ENCODE measurements at regions of chr15 and their contacts with region 1.

Region 1: GRCh38 chr15:41660235-41661077 is at the start of gene MGA:
- DNase-seq: peak; percentile 74 to 95 (median 89)
- ATAC-seq: peak; percentile 79
- H3K4me3 ChIP-seq: peak within 1 kb of the TSS; percentile 56 to 62
- H3K4me3 Mint-ChIP-seq: peak within 1 kb of the TSS; percentile 86
- H3K27ac ChIP-seq: peak within 1 kb of the TSS; percentile 90 to 98
- H3K27ac Mint-ChIP-seq: peak within 1 kb of the TSS; percentile 89
- H3K4me1 ChIP-seq: peaks cover 31% of the 10 kb centered on the region
- H3K4me1 Mint-ChIP-seq: peaks cover 54% of the 10 kb centered on the region
- H3K27me3 ChIP-seq: peaks cover 0 to 3% of the 10 kb centered on the region in 2 experiments
- H3K27me3 Mint-ChIP-seq: no peaks in the 10 kb centered on the region
- CTCF ChIP-seq: no peak
- total RNA-seq, gene MGA: 32.9 to 35.7 TPM

Region 2: DNA sequence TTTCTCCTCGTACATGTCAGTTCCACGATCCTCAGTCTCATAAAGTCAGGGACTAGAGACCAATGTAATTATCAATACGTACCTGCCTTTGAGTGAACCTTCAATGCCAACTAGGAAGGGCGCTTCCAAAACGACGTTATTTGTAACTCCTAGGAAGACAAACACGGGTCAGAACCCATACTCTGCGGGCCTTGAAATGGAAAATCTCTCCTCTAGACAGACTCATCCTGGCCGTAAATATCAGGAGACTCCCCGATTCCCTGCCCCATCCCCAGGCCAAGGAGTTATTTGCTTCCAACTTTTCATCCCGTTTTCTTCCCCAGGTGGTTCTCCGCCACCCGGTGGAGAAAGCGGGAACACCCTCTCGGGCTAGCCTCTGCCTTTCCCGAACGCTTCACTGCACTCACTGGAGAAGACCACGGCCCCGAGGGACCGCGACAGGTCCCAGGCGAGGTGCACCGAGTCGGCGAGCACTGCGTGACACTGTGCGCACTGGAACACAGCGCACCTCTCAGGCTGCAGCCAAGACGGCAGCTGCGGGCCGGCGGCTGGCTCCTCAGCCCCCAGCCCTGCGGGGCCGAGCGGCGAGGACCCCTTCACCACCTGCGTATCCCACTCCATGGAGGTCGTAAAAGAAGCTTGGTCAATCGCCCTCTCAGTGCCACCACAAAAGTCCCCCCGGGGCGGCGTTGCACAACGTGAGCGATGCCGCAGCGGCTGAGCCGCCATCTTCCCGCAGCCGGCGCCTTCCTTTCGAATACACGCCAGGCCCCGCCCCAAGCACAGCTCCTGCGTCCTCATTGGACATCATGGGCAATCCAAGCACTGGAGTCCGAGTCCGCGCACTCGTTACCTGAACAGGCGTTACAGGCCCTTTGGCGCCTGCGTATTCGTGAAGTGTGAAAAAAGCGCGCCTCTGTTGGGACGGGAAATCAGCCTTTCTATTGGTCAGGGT is 328.3 kb before region 1 on chr15 and contains the start of gene OIP5:
- CTCF ChIA-PET with region 1: no interaction called
- POLR2A ChIA-PET with region 1: no interaction called
- intact Hi-C with region 1: loop called in 1 of 2 experiments (anchors 5 kb)
- DNase-seq: peak; percentile 95 to 100 (median 96)
- ATAC-seq: peak; percentile 96
- H3K4me3 ChIP-seq: peak within 1 kb of the TSS; percentile 84 to 94
- H3K4me3 Mint-ChIP-seq: peak within 1 kb of the TSS; percentile 97
- H3K27ac ChIP-seq: peak within 1 kb of the TSS; percentile 46 to 63
- H3K27ac Mint-ChIP-seq: peak within 1 kb of the TSS; percentile 87
- H3K4me1 ChIP-seq: peaks cover 14% of the 10 kb centered on the region
- H3K4me1 Mint-ChIP-seq: peaks cover 30% of the 10 kb centered on the region
- H3K27me3 ChIP-seq: no peaks in the 10 kb centered on the region
- H3K27me3 Mint-ChIP-seq: no peaks in the 10 kb centered on the region
- CTCF ChIP-seq: peak; percentile 58
- total RNA-seq, gene OIP5: not detected

Region 3: GRCh38 chr15:41544650-41545015 is 115.8 kb before region 1 on chr15:
- CTCF ChIA-PET with region 1: no interaction called
- POLR2A ChIA-PET with region 1: interaction called, 6 read pairs
- intact Hi-C with region 1: loop called in 1 of 2 experiments (anchors 2 kb)
- DNase-seq: peak in 7 of 9 experiments; percentile 16 to 61 (median 55)
- ATAC-seq: peak; percentile 30
- H3K4me3 ChIP-seq: peak overlapping the region; percentile 88 to 95
- H3K4me3 Mint-ChIP-seq: peak overlapping the region; percentile 91
- H3K27ac ChIP-seq: peak overlapping the region in 1 of 2 experiments; percentile 64
- H3K27ac Mint-ChIP-seq: peak overlapping the region; percentile 95
- H3K4me1 ChIP-seq: peaks cover 8% of the 10 kb centered on the region
- H3K4me1 Mint-ChIP-seq: peaks cover 18% of the 10 kb centered on the region
- H3K27me3 ChIP-seq: no peaks in the 10 kb centered on the region
- H3K27me3 Mint-ChIP-seq: no peaks in the 10 kb centered on the region
- CTCF ChIP-seq: no peak

Region 4: DNA sequence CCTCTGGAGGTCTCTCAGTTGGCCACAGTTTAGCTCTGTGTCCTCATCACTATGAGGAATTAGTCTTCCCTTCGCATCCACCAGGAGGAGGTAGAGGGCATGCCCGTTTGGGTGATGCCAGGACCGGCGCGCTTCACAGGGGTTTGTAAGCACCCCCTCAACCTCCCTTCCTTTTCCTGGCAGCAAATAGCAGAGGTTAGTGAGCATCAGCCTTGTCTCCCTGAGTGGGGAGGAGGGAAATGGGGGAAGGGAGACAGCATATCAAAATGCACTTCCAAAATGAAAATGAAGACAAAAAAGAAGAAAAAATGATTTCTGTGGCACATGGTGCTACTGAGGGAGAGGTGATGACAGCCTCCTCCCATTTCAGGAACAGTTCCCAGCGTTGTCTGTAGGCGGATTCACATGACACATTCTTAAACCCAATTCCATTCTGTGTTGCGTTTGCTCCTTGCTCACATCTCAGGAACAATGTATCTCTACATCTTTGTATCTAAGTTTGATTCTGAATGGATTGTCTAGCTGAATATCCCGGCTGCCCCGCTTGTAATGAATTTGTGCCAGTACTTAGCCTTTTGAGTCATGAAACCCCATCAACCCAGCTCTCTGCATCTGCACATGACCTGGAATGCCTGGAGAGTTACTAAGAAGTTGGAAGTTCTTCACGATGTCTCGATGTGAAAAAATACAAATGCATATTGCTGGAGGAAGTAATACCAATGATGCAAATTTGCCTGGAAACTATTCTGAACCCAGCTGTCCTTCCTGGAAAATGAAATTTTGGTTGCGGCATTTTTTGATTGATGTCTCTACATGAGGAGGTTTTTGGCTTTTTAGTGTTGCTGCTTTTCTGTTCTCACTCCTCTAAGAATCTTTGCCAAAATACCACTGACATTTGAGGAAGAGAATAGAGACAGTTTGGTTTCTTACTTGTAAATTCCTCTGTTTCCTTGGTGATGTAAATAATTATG is 56.2 kb before region 1 on chr15:
- CTCF ChIA-PET with region 1: interaction called, 7 read pairs
- POLR2A ChIA-PET with region 1: no interaction called
- intact Hi-C with region 1: loop called in 1 of 2 experiments (anchors 10 kb)
- DNase-seq: peak; percentile 22 to 76 (median 59)
- ATAC-seq: peak; percentile 97
- H3K4me3 ChIP-seq: no peak overlapping the region
- H3K4me3 Mint-ChIP-seq: peak overlapping the region; percentile 53
- H3K27ac ChIP-seq: no peak overlapping the region
- H3K27ac Mint-ChIP-seq: no peak overlapping the region
- H3K4me1 ChIP-seq: peaks cover 4% of the 10 kb centered on the region
- H3K4me1 Mint-ChIP-seq: peaks cover 8% of the 10 kb centered on the region
- H3K27me3 ChIP-seq: no peaks in the 10 kb centered on the region
- H3K27me3 Mint-ChIP-seq: peaks cover 12% of the 10 kb centered on the region
- CTCF ChIP-seq: peak; percentile 71

Region 5: GRCh38 chr15:41671656-41672648 is 11.5 kb after region 1 on chr15:
- CTCF ChIA-PET with region 1: interaction called, 3 read pairs
- POLR2A ChIA-PET with region 1: interaction called, 15 read pairs
- intact Hi-C with region 1: no loop called
- DNase-seq: no peak
- ATAC-seq: no peak
- H3K4me3 ChIP-seq: no peak overlapping the region
- H3K4me3 Mint-ChIP-seq: no peak overlapping the region
- H3K27ac ChIP-seq: no peak overlapping the region
- H3K27ac Mint-ChIP-seq: peak overlapping the region; percentile 62
- H3K4me1 ChIP-seq: peaks cover 19% of the 10 kb centered on the region
- H3K4me1 Mint-ChIP-seq: peaks cover 65% of the 10 kb centered on the region
- H3K27me3 ChIP-seq: no peaks in the 10 kb centered on the region
- H3K27me3 Mint-ChIP-seq: no peaks in the 10 kb centered on the region
- CTCF ChIP-seq: no peak

Region 6: DNA sequence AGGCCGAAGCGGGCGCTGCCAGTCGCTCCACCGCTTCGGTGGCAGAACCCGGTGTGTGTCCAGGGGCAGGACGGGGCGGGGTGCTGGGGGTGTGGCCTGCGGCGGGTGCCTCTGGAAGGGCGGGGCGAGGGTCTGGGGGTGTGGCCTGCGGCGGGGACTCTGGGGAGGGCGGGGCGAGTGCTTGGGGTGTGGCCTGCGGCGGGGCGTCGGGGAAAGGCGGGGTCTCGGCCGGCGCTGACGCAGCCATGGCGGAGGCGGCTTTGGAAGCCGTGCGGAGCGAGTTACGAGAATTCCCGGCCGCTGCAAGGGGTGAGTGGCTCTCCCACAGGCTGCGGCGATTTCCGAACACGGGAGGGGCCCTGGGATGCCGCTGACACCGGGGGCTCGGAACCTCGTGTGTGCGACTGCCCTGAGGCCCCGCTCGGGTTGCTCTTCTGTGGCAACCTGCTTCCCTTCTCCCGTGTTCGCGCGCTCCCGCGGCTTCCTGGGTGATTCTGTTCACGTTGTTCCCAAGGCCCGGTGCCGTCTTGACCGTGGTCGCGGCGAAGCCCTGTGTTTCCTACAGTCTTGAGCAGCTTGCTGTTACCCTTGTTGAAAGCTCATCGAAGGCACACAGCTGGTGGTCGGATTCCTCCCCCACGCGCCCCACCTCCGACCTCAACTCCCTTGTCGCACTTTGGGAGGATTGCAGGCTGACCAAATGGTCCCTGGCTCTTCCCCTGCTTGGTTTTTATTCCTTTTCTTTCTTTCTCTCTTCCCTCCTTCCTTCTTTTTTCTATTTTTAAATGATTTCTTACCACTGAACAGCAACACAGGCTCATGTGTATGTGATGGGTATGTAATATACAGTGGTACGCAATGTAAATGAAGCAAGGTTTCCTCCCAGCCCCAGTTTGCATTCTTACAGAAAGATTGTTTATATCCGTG is 167.7 kb after region 1 on chr15 and contains the start of gene JMJD7:
- CTCF ChIA-PET with region 1: no interaction called
- POLR2A ChIA-PET with region 1: no interaction called
- intact Hi-C with region 1: loop called in 1 of 2 experiments (anchors 1 kb)
- DNase-seq: peak; percentile 93 to 98 (median 95)
- ATAC-seq: peak; percentile 97
- H3K4me3 ChIP-seq: peak within 1 kb of the TSS; percentile 93 to 95
- H3K4me3 Mint-ChIP-seq: peak within 1 kb of the TSS; percentile 83
- H3K27ac ChIP-seq: peak within 1 kb of the TSS; percentile 74 to 87
- H3K27ac Mint-ChIP-seq: peak within 1 kb of the TSS; percentile 87
- H3K4me1 ChIP-seq: peaks cover 35% of the 10 kb centered on the region
- H3K4me1 Mint-ChIP-seq: peaks cover 44% of the 10 kb centered on the region
- H3K27me3 ChIP-seq: no peaks in the 10 kb centered on the region
- H3K27me3 Mint-ChIP-seq: no peaks in the 10 kb centered on the region
- CTCF ChIP-seq: no peak
- total RNA-seq, gene JMJD7: 27.5 to 38.3 TPM

Region 7: DNA sequence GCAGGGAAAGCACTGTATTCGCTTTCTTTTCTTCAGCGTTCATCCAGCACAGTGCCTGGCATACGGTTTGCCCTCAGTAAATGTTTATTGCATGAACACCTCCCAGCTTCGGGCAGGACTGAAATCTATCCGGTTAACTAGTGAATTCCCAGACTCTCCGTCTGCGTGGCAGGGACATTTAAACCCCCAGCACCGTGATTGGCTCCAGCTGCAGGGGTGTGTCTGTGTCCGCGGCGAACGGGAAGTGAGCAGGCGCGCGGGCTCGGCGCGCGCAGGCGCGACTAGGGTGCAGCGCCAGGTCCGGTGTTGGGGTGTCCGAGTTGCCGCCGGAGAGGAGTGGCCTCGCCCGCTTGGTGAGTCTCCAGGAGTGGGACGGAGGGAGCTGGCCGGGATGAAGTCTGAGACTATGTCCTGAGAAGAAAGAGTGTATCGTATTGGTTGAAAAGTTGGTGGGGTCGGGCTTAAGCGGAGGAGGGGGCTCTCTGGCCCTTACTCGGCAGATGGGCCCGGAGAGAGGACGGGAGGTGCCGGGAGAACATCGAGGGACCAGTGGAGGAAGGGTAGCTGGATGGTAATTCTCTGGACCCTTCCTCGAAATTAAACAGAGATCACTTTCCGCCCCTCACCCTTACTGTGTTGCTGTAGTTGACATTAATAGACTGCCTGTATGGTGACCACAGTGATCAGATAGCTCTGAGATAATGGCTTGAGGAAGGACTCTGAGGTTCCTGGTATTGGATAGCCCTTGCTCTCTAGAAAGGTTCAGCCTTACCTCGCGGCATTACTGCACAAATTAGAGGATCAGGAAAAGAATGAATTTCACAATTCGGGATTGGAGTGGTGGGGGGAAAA is 835.1 kb after region 1 on chr15 and contains the start of gene SNAP23:
- CTCF ChIA-PET with region 1: no interaction called
- POLR2A ChIA-PET with region 1: no interaction called
- intact Hi-C with region 1: loop called in 1 of 2 experiments (anchors 5 kb)
- DNase-seq: peak; percentile 49 to 91 (median 84)
- ATAC-seq: peak; percentile 90
- H3K4me3 ChIP-seq: peak within 1 kb of the TSS; percentile 82 to 90
- H3K4me3 Mint-ChIP-seq: peak within 1 kb of the TSS; percentile 97
- H3K27ac ChIP-seq: peak within 1 kb of the TSS; percentile 60 to 71
- H3K27ac Mint-ChIP-seq: peak within 1 kb of the TSS; percentile 97
- H3K4me1 ChIP-seq: peaks cover 41% of the 10 kb centered on the region
- H3K4me1 Mint-ChIP-seq: peaks cover 76% of the 10 kb centered on the region
- H3K27me3 ChIP-seq: no peaks in the 10 kb centered on the region
- H3K27me3 Mint-ChIP-seq: no peaks in the 10 kb centered on the region
- CTCF ChIP-seq: no peak
- total RNA-seq, gene SNAP23: 30.9 to 39.9 TPM